WTC11 (cell line): ENCODE measurements at regions of chr17 and their contacts with region 1.

Region 1: DNA sequence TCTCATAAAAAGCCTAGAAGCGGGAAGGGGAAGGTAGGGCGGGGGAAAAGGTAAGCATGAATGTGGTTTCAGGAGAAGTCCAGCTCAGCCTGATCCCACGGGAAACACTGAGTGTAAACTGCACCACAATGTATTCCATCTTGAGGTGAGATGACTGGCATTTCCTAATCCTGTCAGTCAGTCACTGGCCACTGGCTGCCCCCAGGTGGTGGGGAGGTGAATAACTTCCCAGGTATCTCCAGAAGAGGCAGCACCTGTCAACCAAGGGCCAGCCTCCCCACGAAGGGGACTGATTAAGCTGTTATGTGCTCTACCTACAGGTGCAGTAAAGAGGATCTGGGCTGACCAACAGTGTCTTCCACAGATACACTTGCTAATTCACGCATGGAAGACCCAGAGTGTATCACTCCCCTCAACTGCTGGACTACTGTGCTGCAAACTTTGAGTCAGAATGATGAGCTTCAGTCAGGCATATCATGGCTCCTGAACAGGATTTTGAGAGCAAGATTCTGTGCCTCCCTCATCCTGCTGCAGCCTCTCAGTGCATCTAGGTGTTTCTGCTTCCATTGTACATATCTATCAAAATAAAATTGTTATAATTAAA is 108.5 kb upstream of the CCL2 start:
- DNase-seq: peak; percentile 89
- ATAC-seq: peak; percentile 93
- H3K4me3 Mint-ChIP-seq: no peak overlapping the region
- H3K27ac Mint-ChIP-seq: no peak overlapping the region
- H3K4me1 Mint-ChIP-seq: peaks cover 26% of the 10 kb centered on the region
- H3K27me3 Mint-ChIP-seq: peaks cover 2% of the 10 kb centered on the region; the same call in 1 of the 2 replicates
- CTCF ChIP-seq: peak; percentile 88

Region 2: GRCh38 chr17:33779225-33779591 is 367.3 kb before region 1 on chr17:
- CTCF ChIA-PET with region 1: interaction called, 14 read pairs
- POLR2A ChIA-PET with region 1: no interaction called
- DNase-seq: peak; percentile 45
- ATAC-seq: peak; percentile 22; the same call in 1 of the 2 replicates
- H3K4me3 Mint-ChIP-seq: no peak overlapping the region
- H3K27ac Mint-ChIP-seq: no peak overlapping the region
- H3K4me1 Mint-ChIP-seq: peaks cover 5% of the 10 kb centered on the region; the same call in 1 of the 2 replicates
- H3K27me3 Mint-ChIP-seq: no peaks in the 10 kb centered on the region; the same call in 1 of the 2 replicates
- CTCF ChIP-seq: peak; percentile 99

Region 3: DNA sequence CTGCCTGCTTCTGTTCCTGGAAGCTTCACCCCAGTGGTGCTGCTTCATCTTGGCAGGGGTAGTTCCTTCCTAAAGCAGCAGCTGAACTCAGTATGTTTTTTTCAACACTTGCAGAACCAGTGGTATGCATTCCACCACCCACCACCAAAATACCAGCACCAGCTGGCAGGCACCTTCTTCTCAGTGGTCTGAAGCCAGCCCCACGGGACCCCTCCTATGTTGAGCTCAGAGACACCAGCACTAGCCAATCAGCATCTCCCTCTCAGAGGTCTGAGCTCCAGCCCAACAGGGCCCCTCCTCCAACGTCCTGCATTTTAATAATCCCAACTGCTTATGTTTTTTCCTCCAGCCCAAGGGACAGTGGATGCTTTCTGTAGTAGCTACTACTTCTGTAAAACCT is 191.1 kb before region 1 on chr17:
- CTCF ChIA-PET with region 1: interaction called, 10 read pairs
- POLR2A ChIA-PET with region 1: no interaction called
- DNase-seq: no peak
- ATAC-seq: no peak
- H3K4me3 Mint-ChIP-seq: no peak overlapping the region
- H3K27ac Mint-ChIP-seq: no peak overlapping the region
- H3K4me1 Mint-ChIP-seq: peaks cover 6% of the 10 kb centered on the region
- H3K27me3 Mint-ChIP-seq: peaks cover 4% of the 10 kb centered on the region; the same call in 1 of the 2 replicates
- CTCF ChIP-seq: no peak

Region 4: DNA sequence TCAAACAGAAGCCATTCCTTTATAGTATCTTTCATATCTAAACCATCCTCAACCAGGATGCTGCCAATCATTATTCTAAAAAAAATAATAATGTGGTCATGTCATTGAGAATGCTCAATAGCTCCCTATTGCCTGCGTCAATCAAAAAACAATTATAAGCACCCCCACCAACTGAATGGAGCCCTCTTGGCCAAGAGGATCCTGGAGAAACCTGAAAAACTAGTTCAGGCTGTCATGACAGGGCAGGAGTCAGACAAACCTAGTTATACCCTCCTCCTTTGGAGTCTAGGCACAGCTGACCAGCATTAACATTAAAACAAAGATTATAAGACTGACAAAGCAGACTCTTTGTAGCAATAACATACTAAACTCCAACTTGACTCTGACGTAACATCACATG is 10.7 kb before region 1 on chr17:
- CTCF ChIA-PET with region 1: interaction called, 17 read pairs
- POLR2A ChIA-PET with region 1: interaction called, 3 read pairs
- DNase-seq: no peak
- ATAC-seq: peak; percentile 33; the same call in 1 of the 2 replicates
- H3K4me3 Mint-ChIP-seq: peak overlapping the region; percentile 7
- H3K27ac Mint-ChIP-seq: peak overlapping the region; percentile 72
- H3K4me1 Mint-ChIP-seq: peaks cover 68% of the 10 kb centered on the region
- H3K27me3 Mint-ChIP-seq: peaks cover 13% of the 10 kb centered on the region
- CTCF ChIP-seq: no peak

Region 5: DNA sequence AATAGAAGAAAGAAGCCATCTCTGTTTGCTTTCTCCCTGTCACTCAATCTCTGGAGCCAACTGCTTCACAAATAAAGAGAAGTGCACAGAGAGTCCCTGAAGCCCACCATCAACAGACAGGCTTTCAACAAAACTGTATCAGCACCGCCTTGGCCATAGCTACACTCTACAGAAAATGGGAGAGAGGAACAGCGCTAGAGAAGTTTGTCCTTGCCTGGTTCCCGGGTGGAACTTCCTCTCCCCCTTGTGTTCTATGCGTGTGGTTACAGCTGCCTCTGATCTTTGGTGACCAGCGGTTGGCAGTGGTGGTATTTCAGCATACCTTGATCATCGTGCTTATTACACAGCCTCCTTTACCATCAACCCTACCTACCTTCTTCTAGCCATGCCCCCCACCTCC is 17.1 kb after region 1 on chr17:
- CTCF ChIA-PET with region 1: interaction called, 67 read pairs
- POLR2A ChIA-PET with region 1: interaction called, 3 read pairs
- DNase-seq: peak; percentile 44
- ATAC-seq: peak; percentile 92
- H3K4me3 Mint-ChIP-seq: no peak overlapping the region
- H3K27ac Mint-ChIP-seq: peak overlapping the region; percentile 35; the same call in 1 of the 2 replicates
- H3K4me1 Mint-ChIP-seq: peaks cover 54% of the 10 kb centered on the region
- H3K27me3 Mint-ChIP-seq: no peaks in the 10 kb centered on the region; the same call in 1 of the 2 replicates
- CTCF ChIP-seq: peak; percentile 39; the same call in 1 of the 2 replicates